AG04450 (cell line): ENCODE measurements at regions of chr1 and their contacts with region 1.

Region 1: DNA sequence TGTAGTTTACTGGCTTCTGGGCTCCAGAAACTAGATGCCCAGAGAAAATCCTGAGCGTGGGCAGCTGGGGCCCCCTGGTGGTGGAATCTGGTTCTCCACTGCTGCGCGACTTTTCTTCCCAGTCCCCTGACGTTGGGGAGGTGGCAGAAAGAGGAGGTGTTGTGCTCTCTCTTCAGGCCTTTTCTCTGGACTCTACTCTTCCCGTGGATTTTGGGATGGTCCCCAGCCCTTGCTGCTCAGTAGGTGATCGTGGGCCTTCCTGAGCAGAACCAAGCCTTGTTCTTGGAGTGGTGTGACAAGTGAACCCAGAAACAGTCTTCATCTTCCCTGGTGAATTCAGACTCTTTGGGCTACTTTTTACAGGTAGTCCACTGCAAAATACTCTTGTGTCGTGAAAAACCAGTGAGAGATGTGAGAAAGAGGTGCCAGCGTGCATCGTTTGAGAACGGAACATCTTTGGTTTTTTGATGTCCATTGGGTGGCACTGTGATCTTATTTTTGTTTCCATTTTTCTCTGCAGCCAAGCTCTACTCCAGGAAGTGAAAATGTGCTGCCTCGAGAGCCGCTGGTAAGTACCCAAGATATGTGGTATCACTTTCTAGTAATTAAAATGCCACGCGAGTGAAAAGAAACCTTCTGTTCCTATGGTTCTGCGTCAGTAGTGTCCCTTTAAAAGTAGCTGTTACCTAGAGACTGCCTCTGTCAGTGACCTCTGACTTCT is 20.2 kb downstream of the PEX14 start:
- DNase-seq: no peak
- H3K4me3 ChIP-seq: peak overlapping the region; percentile 27
- H3K27ac ChIP-seq: no peak overlapping the region
- H3K27me3 ChIP-seq: no peaks in the 10 kb centered on the region
- CTCF ChIP-seq: peak; percentile 94

Region 2: DNA sequence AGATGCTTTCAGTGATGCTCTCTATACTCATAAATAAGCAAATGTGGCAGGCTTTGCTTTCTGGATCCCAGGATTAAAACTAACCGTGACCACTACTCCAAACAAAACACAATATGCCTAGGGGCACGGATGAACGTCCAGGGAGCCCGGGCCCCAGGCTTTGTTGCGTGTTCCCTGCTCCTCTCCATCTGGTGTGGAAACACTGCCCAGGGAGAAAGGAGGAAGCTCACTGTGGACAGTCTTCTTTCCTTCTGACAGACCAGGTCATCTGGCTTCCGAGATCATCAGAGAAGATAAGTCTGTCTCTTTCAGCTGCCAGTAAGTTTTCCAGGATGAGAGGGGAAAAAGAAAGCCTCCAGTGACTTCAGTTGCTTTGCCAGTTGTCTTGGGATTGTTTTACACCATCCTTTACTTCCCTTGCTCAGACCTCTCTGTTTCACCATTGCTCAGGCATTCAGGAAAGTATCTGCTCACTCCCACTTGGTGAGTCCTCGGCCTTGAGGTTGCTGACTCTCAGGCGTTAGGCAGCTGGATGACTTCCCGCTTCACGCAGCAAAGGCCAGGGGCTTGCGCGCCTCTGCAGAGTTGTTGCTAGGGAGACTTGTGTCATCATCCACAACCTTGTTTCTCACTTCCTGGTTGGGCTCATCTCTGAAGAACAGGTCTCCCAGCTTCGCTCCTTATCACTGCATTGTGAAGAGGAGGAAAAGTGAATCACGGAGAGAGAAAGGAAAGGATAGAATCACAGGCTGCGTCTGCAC is 116.7 kb before region 1 on chr1:
- CTCF ChIA-PET with region 1: interaction called, 17 read pairs
- POLR2A ChIA-PET with region 1: no interaction called
- DNase-seq: peak; percentile 64
- H3K4me3 ChIP-seq: no peak overlapping the region
- H3K27ac ChIP-seq: peak overlapping the region; percentile 93
- H3K27me3 ChIP-seq: no peaks in the 10 kb centered on the region
- CTCF ChIP-seq: no peak

Region 3: DNA sequence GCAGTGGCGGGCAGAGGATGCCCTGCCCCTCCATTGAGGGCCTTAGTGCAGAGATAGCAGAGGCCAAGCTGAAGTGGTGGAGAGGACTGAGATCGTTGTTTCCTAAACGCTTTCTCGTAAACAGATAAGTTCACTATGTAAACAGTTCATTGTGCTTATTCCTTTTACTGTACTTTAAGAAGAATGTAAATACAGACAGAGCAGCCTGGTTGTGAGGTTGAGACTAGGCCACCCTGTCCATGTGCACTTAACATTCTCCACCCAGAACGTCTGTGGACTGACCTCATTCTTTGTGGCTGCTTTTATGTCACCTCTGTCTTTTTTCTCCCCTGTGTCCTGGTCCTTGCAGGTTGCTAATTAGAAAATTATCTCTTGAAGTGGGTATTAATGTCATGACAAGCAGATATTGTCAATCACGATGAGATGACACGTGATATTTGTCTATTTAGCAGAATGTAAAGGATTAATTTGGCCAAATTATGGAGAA is 56.2 kb before region 1 on chr1:
- CTCF ChIA-PET with region 1: interaction called, 21 read pairs
- POLR2A ChIA-PET with region 1: no interaction called
- DNase-seq: no peak
- H3K4me3 ChIP-seq: no peak overlapping the region
- H3K27ac ChIP-seq: no peak overlapping the region
- H3K27me3 ChIP-seq: no peaks in the 10 kb centered on the region
- CTCF ChIP-seq: no peak

Region 4: GRCh38 chr1:10472220-10473144 is 22.4 kb before region 1 on chr1 and contains the start of gene DFFA:
- CTCF ChIA-PET with region 1: interaction called, 16 read pairs
- POLR2A ChIA-PET with region 1: no interaction called
- DNase-seq: peak; percentile 92
- H3K4me3 ChIP-seq: peak within 1 kb of the TSS; percentile 82
- H3K27ac ChIP-seq: peak within 1 kb of the TSS; percentile 57
- H3K27me3 ChIP-seq: no peaks in the 10 kb centered on the region
- CTCF ChIP-seq: no peak
- polyA plus RNA-seq, gene DFFA: 33.6 and 35.3 TPM in 2 replicates

Region 5: DNA sequence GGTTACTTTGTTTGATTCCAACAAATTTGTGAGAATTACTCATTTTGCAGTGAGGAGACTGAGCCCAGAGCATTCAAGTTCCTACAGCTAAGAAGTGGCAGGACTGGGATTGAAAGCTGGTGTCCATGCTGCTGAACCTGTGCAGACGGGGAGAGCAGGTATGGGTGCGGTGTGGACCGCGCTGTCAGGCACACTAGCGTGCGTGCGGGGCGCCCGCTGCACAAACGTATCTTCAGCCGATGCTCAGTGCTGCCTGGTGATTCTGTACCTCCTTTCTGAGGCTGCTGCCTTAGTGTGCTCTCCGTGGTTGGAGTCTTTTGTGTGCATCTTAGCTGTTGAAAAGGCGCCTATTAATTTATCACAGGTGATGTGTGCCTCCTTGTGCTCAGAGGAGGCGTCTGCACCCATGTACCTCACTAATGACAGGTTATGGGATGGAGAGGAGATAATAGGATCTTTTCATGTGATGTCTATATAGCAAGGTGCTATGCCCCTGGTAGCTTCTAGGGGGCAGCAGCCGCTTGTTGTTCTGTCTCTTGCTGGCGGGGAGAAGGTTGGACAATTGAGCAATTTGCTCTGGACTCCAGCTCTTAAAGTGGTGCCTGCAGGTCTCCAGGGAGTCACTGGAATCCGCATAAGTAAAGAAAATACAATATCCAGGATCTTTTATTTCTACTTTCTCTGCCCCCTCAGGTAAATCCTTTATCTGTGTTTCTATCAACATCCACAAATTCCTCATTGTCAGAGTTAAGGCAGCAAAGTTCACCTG is 12.4 kb after region 1 on chr1:
- CTCF ChIA-PET with region 1: interaction called, 89 read pairs
- POLR2A ChIA-PET with region 1: no interaction called
- DNase-seq: no peak
- H3K4me3 ChIP-seq: no peak overlapping the region
- H3K27ac ChIP-seq: no peak overlapping the region
- H3K27me3 ChIP-seq: no peaks in the 10 kb centered on the region
- CTCF ChIP-seq: peak; percentile 92

Region 6: DNA sequence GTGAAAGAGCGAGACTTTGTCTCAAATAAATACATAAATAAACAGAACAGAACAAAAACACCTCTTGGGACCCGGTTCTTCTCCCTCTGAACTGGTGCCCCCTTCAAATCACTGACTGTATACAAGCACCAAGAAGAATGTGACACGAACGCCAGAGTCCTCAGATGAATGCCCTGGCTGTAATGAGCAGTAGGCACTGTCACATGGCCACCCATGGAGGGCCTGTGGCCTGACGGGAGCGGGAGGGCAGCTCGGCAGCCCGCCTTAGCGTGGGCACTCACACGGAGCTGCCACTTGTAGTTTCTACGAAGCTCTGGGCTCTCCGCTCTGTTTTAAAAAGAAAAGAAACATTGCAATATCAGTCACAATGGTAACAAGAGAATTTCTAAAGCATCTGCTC is 125.9 kb after region 1 on chr1:
- CTCF ChIA-PET with region 1: no interaction called
- POLR2A ChIA-PET with region 1: no interaction called
- DNase-seq: no peak
- H3K4me3 ChIP-seq: no peak overlapping the region
- H3K27ac ChIP-seq: no peak overlapping the region
- H3K27me3 ChIP-seq: no peaks in the 10 kb centered on the region
- CTCF ChIP-seq: no peak

Region 7: GRCh38 chr1:10941891-10942541 is 447.1 kb after region 1 on chr1:
- CTCF ChIA-PET with region 1: interaction called, 10 read pairs
- POLR2A ChIA-PET with region 1: no interaction called
- DNase-seq: no peak
- H3K4me3 ChIP-seq: no peak overlapping the region
- H3K27ac ChIP-seq: no peak overlapping the region
- H3K27me3 ChIP-seq: peaks cover 22% of the 10 kb centered on the region
- CTCF ChIP-seq: peak; percentile 86